B cell (primary cell): ENCODE measurements at regions of chr15 and their contacts with region 1.

Region 1: DNA sequence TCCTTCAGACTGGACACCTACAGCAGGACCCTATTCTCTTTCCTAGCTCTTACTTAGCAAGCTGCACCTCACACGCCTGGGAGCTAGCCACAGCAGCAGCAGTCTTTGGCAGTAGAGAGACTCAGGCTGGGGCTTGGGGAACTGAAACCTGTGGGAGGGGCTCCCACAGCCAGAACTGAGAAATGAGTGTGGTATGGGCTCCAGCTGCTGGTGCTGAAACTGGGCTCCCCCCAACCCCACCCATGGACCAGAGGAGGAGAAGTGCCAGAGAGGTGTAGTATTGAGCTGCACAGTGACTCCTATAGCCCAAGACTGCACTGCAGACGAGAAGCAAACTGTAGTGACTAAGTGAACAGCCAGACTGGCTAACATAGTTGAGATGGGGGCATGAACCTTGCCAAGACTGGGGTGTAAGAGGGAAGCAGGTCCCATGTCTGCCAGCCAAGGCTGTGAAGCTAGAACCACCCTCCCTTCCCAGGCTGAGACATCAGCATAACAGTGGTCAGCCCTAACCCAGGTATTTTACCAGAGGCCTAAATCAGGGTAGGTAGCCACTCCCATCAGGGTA is 62.5 kb downstream of the MYO5A start:
- DNase-seq: peak; percentile 94
- ATAC-seq: peak; percentile 99
- H3K4me3 ChIP-seq: no peak overlapping the region
- H3K4me3 Mint-ChIP-seq: peak overlapping the region; percentile 33
- H3K27ac ChIP-seq: peak overlapping the region; percentile 43 to 65
- H3K27ac Mint-ChIP-seq: peak overlapping the region; percentile 78
- H3K4me1 ChIP-seq: peaks cover 34 to 37% of the 10 kb centered on the region in 2 donors
- H3K4me1 Mint-ChIP-seq: peaks cover 49% of the 10 kb centered on the region
- H3K27me3 ChIP-seq: no peaks in the 10 kb centered on the region
- H3K27me3 Mint-ChIP-seq: no peaks in the 10 kb centered on the region
- CTCF ChIP-seq: peak; percentile 62

Region 2: GRCh38 chr15:52331490-52332240 is 134.6 kb before region 1 on chr15:
- CTCF ChIA-PET with region 1: interaction called, 17 read pairs
- POLR2A ChIA-PET with region 1: interaction called, 3 read pairs
- intact Hi-C with region 1: loop called (anchors 1 kb)
- DNase-seq: peak; percentile 67
- ATAC-seq: peak; percentile 90
- H3K4me3 ChIP-seq: no peak overlapping the region
- H3K4me3 Mint-ChIP-seq: no peak overlapping the region
- H3K27ac ChIP-seq: peak overlapping the region in 1 of 2 donors; percentile 20
- H3K27ac Mint-ChIP-seq: peak overlapping the region; percentile 74
- H3K4me1 ChIP-seq: peaks cover 7 to 8% of the 10 kb centered on the region in 2 donors
- H3K4me1 Mint-ChIP-seq: peaks cover 10% of the 10 kb centered on the region
- H3K27me3 ChIP-seq: no peaks in the 10 kb centered on the region
- H3K27me3 Mint-ChIP-seq: no peaks in the 10 kb centered on the region
- CTCF ChIP-seq: peak; percentile 66

Region 3: DNA sequence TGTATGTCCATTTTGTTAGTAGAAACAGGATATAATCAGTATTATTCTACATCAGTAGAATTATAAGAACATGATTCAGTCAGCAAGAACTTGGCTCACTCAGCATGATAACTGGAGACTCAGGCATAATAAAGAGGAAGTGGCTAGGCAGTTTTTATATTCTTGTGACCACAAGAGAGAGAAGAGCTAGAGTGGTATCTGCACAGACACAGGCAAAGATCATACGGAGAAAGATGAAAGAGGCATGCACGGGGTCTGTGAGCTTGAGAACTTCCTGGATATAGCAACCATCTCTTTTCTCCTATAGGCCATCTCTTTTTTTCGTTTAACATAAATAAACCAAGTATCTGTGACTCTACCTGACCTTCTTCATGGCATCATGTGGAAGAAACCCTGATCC is 15.7 kb after region 1 on chr15:
- CTCF ChIA-PET with region 1: interaction called, 14 read pairs
- POLR2A ChIA-PET with region 1: interaction called, 3 read pairs
- intact Hi-C with region 1: loop called (anchors 1 kb)
- DNase-seq: peak; percentile 80
- ATAC-seq: peak; percentile 99
- H3K4me3 ChIP-seq: peak overlapping the region in 2 of 5 experiments; percentile 1 to 24
- H3K4me3 Mint-ChIP-seq: peak overlapping the region; percentile 1
- H3K27ac ChIP-seq: peak overlapping the region; percentile 39 to 63
- H3K27ac Mint-ChIP-seq: peak overlapping the region; percentile 18
- H3K4me1 ChIP-seq: peaks cover 37 to 42% of the 10 kb centered on the region in 2 donors
- H3K4me1 Mint-ChIP-seq: peaks cover 50% of the 10 kb centered on the region
- H3K27me3 ChIP-seq: no peaks in the 10 kb centered on the region
- H3K27me3 Mint-ChIP-seq: no peaks in the 10 kb centered on the region
- CTCF ChIP-seq: no peak

Region 4: GRCh38 chr15:52528991-52529926 is 63.0 kb after region 1 on chr15:
- CTCF ChIA-PET with region 1: interaction called, 9 read pairs
- POLR2A ChIA-PET with region 1: interaction called, 3 read pairs
- intact Hi-C with region 1: loop called (anchors 1 kb)
- DNase-seq: peak; percentile 92
- ATAC-seq: peak; percentile 79
- H3K4me3 ChIP-seq: peak overlapping the region; percentile 51 to 80 (median 71)
- H3K4me3 Mint-ChIP-seq: peak overlapping the region; percentile 81
- H3K27ac ChIP-seq: peak overlapping the region; percentile 73 to 90
- H3K27ac Mint-ChIP-seq: peak overlapping the region; percentile 92
- H3K4me1 ChIP-seq: peaks cover 11 to 18% of the 10 kb centered on the region in 2 donors
- H3K4me1 Mint-ChIP-seq: peaks cover 27% of the 10 kb centered on the region
- H3K27me3 ChIP-seq: no peaks in the 10 kb centered on the region
- H3K27me3 Mint-ChIP-seq: no peaks in the 10 kb centered on the region
- CTCF ChIP-seq: no peak

Region 5: DNA sequence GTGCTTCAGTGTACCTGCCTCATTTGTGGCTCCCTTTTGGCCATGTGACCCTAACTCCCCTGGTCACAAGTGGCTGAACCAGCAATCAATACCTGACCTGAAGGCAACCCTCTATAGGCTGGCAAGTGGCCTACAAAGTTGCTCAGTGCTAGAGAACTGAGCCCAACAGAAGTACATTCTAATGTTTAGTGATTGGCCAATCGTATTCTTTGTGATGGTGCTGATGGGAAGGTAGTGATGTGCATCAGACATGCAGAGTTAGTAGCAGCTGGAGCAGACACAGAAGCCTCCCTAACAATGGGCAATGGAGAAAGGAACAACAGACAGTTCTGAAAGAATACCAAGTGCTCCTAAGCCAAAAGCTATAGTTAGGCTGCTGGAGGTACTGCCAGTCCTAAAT is 223.3 kb after region 1 on chr15:
- CTCF ChIA-PET with region 1: no interaction called
- POLR2A ChIA-PET with region 1: no interaction called
- intact Hi-C with region 1: no loop called
- DNase-seq: no peak
- ATAC-seq: no peak
- H3K4me3 ChIP-seq: no peak overlapping the region
- H3K4me3 Mint-ChIP-seq: no peak overlapping the region
- H3K27ac ChIP-seq: no peak overlapping the region
- H3K27ac Mint-ChIP-seq: no peak overlapping the region
- H3K4me1 ChIP-seq: peaks cover 18 to 22% of the 10 kb centered on the region in 2 donors
- H3K4me1 Mint-ChIP-seq: peaks cover 31% of the 10 kb centered on the region
- H3K27me3 ChIP-seq: no peaks in the 10 kb centered on the region
- H3K27me3 Mint-ChIP-seq: no peaks in the 10 kb centered on the region
- CTCF ChIP-seq: no peak

Region 6: GRCh38 chr15:52730173-52730572 is 264.0 kb after region 1 on chr15:
- CTCF ChIA-PET with region 1: interaction called, 4 read pairs
- POLR2A ChIA-PET with region 1: no interaction called
- intact Hi-C with region 1: loop called (anchors 5 kb)
- DNase-seq: peak; percentile 80
- ATAC-seq: peak; percentile 97
- H3K4me3 ChIP-seq: no peak overlapping the region
- H3K4me3 Mint-ChIP-seq: peak overlapping the region; percentile 64
- H3K27ac ChIP-seq: peak overlapping the region; percentile 46 to 60
- H3K27ac Mint-ChIP-seq: peak overlapping the region; percentile 91
- H3K4me1 ChIP-seq: peaks cover 26 to 31% of the 10 kb centered on the region in 2 donors
- H3K4me1 Mint-ChIP-seq: peaks cover 31% of the 10 kb centered on the region
- H3K27me3 ChIP-seq: no peaks in the 10 kb centered on the region
- H3K27me3 Mint-ChIP-seq: no peaks in the 10 kb centered on the region
- CTCF ChIP-seq: peak; percentile 49